ENCODE measurements at regions of chr1 and their contacts with region 1.

Region 1: DNA sequence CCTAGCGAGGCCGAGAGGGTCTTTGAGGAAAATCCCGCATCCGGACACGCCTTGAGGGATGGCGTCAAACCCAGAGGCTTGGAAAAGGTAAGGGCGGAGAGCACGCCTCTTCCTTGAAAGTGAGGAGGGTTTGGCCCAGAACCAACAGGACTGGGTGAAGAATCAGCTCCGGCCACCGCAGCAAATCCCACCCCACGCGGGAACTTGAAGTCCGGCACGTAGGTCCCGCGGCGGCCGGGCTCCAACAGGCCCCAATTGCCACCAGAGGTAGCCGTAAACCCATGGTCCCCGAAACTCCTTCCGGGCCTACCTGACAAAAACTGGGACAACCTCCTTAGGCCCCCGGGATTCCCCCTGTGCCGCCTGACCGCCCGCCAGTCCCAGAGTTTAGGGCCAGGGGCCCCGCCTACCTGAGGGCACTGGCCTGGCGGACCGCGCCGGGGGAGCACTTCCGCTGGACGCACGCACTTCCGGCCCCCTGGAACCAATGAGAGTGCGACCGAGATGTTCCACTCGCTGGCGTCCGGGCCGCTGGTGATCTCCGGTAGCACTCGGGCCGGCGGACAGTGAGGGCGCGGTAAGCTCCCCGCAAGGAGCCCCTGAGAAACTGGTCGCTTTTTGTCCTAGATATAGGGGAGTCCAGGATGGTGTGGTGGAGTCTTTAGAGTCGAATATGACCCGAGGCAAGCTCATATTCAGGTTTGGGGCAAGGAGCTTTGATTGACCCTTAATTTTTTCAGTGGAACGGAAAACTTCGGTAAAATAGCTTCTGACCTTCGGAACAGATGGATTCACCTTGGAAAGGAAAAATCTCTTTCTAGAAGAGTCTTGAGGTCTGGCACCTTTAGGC is at the starts of genes LZIC and NMNAT1:
- DNase-seq: peak; percentile 93
- ATAC-seq: peak; percentile 100
- total RNA-seq, gene LZIC: 42.4 TPM
- total RNA-seq, gene NMNAT1: 10.7 TPM

Region 2: DNA sequence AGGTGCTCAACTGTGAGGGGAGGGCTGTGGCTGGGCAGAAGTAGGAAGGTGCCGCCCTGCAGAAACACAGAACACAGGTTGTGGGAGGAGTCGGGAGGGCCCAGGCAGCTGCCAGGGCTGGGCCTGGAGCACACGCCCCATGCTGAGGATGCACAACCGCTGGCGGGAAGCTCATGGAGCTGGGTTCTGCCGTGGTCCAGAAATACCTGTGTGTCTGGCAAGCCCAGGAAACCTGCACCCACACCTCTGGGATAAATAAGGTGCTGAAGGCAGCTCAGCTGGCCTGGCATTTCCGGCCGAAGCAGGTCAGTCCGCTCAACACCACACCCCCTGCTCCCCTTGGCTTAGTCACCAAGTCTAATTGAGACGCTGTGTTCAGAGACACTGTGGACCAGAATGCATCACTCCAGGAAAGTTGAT is 65.2 kb before region 1 on chr1:
- intact Hi-C with region 1: loop called (anchors 1 kb)
- DNase-seq: no peak
- ATAC-seq: no peak

Measured in sciatic nerve (tissue), 2 donors.